A673 (cell line): ENCODE measurements at regions of chr11 and their contacts with region 1.

Region 1: DNA sequence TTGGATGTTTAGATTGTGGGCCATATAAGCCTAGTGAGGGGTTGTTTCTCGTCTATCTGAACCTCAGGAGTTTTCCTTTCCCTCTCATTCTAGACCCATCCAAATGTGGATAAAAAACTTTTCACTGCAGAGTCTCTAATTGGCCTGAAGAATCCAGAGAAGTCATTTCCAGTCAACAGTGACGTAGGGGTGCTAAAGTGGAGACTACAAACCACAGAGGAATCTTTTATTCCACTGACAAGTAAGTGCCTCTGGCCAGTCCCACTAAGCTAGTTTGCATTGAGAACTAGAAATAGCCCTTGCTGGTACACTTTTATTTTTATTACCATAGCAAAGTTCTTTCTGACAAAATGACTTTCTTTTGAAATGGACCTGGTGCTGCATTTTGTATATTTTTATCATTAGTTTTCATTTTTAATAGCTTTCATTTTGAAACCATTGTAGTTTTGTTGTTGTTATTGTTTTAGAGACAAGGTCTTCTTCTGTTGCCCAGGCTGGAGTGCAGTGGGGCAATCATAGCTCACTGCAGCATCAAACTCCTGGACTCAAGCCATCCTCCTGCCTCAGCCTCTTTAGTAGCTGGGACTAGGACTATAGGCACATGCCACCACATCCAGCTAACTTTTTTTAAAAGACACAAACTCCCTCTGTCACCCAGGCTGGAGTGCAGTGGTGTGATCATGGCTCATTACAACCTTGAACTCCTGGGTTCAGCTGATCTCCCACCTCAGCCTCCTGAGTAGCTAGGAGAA is 14.6 kb upstream of the PHLDB1 start:
- DNase-seq: no peak
- H3K4me3 ChIP-seq: no peak overlapping the region
- H3K27ac ChIP-seq: no peak overlapping the region
- H3K4me1 ChIP-seq: no peaks in the 10 kb centered on the region
- H3K27me3 ChIP-seq: no peaks in the 10 kb centered on the region
- CTCF ChIP-seq: no peak

Region 2: DNA sequence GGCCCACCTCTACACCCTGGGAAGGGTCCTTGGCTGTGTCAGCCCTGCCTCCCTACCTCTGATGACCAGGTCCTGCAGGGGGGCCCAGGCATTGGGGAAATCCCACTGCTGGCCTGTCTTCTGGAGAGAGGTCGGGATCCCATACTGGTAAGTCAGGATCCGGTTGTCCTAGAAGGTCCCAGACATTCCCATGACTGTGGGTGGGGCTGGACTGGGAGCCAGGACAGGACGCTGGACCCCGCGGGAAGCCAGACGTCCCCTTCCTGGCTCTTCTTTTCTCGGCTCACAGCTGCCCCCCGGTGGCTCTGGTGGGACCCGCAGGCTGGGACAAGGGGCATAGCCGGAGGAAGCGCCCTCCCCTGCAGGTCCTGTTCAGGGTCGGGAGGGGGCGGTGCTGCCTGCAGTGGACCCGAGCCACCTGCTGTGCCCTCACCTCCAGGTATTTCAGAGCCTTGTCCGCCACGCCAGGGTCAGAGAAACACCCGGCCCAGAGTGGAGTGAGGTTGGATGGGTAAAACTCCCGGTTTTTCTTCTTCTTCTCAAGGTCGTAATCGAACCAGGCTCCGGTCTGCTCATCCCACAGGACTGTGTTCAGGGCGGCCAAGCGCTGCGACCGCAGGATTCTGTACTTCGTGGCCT is 66.6 kb after region 1 on chr11:
- CTCF ChIA-PET with region 1: interaction called, 4 read pairs
- POLR2A ChIA-PET with region 1: no interaction called
- intact Hi-C with region 1: loop called (anchors 1 kb)
- DNase-seq: peak; percentile 95
- H3K4me3 ChIP-seq: no peak overlapping the region
- H3K27ac ChIP-seq: no peak overlapping the region
- H3K4me1 ChIP-seq: no peaks in the 10 kb centered on the region
- H3K27me3 ChIP-seq: no peaks in the 10 kb centered on the region
- CTCF ChIP-seq: peak; percentile 100